Activated CD4-positive, alpha-beta memory T cell treated with anti-CD3 and anti-CD28 coated beads, Interleukin-2, amount 10 ng/mL, durations not matched to agents 7 days and 5 days (primary cell): ENCODE measurements at regions of chr12 and their contacts with region 1.

Region 1: GRCh38 chr12:8544295-8544694 is 3.6 kb upstream of the CLEC4E start:
- DNase-seq: peak; percentile 76
- H3K4me3 Mint-ChIP-seq: no peak overlapping the region
- H3K27ac Mint-ChIP-seq: no peak overlapping the region
- H3K4me1 Mint-ChIP-seq: peaks cover 4% of the 10 kb centered on the region
- H3K27me3 Mint-ChIP-seq: peaks cover 31% of the 10 kb centered on the region

Region 2: GRCh38 chr12:8465306-8465996 is 78.8 kb before region 1 on chr12:
- CTCF ChIA-PET with region 1: no interaction called
- POLR2A ChIA-PET with region 1: no interaction called
- DNase-seq: no peak
- H3K4me3 Mint-ChIP-seq: no peak overlapping the region
- H3K27ac Mint-ChIP-seq: no peak overlapping the region
- H3K4me1 Mint-ChIP-seq: no peaks in the 10 kb centered on the region
- H3K27me3 Mint-ChIP-seq: peaks cover 16% of the 10 kb centered on the region

Region 3: DNA sequence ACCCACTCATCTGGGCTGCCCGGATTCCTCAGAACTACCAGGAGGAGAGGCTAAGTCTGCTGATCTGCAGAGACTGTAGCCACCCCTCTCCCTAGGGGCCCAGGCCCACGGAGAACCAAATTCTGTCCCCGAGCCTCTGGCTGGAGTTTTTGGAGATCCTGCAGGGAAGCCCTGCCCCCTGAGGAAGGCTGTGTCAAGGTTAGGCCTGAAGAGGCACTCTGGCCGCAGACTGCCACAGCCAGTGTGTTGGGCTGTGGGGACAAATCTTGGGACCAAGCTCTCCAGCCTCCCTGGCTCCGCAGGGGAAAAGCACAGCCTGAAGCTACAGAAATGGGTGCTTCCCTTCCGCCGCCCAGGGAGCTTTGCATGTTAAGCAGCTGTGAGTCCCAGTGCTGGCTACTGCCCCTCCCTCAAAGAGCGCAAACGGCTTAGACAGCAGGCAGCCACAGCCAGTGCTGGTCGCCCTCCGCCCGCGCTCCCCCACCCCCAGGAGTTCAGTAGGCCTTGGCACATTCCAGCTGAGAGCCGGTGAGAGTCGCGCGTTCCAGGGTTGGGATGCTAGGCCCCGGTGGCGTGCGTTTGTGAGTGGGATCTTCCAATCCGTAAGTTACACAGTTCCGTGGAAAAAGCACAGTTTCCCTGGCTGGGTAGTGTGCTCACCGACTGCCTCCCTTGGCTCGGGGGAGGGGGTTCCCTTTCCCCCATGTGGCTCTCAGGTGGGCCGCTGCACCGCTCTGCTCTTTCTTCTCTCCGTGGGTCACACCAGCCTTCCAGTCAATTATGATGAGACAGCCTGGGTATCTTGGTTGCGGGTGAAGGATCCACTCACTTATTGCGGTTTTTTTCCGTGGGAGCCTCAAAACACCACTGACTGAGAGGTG is 16.8 kb before region 1 on chr12:
- CTCF ChIA-PET with region 1: interaction called, 11 read pairs
- POLR2A ChIA-PET with region 1: no interaction called
- DNase-seq: no peak
- H3K4me3 Mint-ChIP-seq: no peak overlapping the region
- H3K27ac Mint-ChIP-seq: no peak overlapping the region
- H3K4me1 Mint-ChIP-seq: no peaks in the 10 kb centered on the region
- H3K27me3 Mint-ChIP-seq: peaks cover 41% of the 10 kb centered on the region

Region 4: DNA sequence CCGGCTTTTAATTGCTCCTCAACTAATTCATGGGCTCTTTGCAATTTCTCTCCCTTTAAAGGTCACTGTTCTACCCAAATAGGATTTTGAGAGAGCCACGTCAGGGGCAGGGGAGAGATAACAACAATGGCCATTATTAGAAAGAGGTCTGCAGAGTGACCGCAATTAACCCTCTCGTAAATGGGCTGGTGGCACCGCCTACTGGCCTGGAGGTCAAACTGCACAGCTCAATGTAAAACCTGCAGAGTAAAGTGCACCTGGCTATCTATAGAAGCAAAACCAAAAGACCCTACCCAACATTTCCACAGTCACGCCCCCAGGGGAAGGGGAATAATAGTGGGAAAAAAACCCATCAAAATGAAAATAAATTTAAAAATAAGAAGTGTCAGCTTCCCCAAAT is 18.0 kb after region 1 on chr12:
- CTCF ChIA-PET with region 1: interaction called, 12 read pairs
- POLR2A ChIA-PET with region 1: no interaction called
- DNase-seq: no peak
- H3K4me3 Mint-ChIP-seq: no peak overlapping the region
- H3K27ac Mint-ChIP-seq: no peak overlapping the region
- H3K4me1 Mint-ChIP-seq: no peaks in the 10 kb centered on the region
- H3K27me3 Mint-ChIP-seq: no peaks in the 10 kb centered on the region

Region 5: DNA sequence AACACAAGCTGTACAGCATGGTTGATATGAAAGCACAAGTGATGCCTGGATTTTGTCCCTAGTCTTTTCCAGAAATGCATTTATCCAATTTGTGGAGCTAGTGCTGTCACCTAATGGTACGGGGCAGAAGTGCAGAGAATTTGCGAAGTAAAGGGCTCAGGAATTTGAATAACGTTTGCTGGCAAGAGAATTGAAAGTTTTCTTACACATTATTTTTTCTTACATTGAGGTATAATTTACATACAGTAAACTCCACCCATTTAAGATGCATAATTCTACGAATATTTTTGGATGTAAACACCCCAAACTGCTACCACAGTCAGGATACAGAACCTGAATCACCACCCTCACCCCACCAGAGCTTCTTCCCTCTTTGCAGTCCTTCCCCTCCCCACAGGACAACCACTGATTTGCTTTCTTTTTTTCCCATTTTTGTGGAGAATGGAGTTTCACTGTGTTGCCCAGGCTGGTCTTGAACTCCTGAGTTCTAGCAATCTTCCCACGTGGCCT is 64.8 kb after region 1 on chr12:
- CTCF ChIA-PET with region 1: interaction called, 43 read pairs
- POLR2A ChIA-PET with region 1: no interaction called
- DNase-seq: no peak
- H3K4me3 Mint-ChIP-seq: no peak overlapping the region
- H3K27ac Mint-ChIP-seq: no peak overlapping the region
- H3K4me1 Mint-ChIP-seq: peaks cover 9% of the 10 kb centered on the region
- H3K27me3 Mint-ChIP-seq: peaks cover 17% of the 10 kb centered on the region

Region 6: GRCh38 chr12:8709124-8709830 is 165.0 kb after region 1 on chr12:
- CTCF ChIA-PET with region 1: no interaction called
- POLR2A ChIA-PET with region 1: no interaction called
- DNase-seq: no peak
- H3K4me3 Mint-ChIP-seq: no peak overlapping the region
- H3K27ac Mint-ChIP-seq: no peak overlapping the region
- H3K4me1 Mint-ChIP-seq: no peaks in the 10 kb centered on the region
- H3K27me3 Mint-ChIP-seq: no peaks in the 10 kb centered on the region

Region 7: GRCh38 chr12:8890313-8891085 is 346.2 kb after region 1 on chr12:
- CTCF ChIA-PET with region 1: interaction called, 27 read pairs
- POLR2A ChIA-PET with region 1: no interaction called
- DNase-seq: peak; percentile 59
- H3K4me3 Mint-ChIP-seq: peak overlapping the region; percentile 71
- H3K27ac Mint-ChIP-seq: no peak overlapping the region
- H3K4me1 Mint-ChIP-seq: peaks cover 3% of the 10 kb centered on the region
- H3K27me3 Mint-ChIP-seq: peaks cover 2% of the 10 kb centered on the region

Region 8: DNA sequence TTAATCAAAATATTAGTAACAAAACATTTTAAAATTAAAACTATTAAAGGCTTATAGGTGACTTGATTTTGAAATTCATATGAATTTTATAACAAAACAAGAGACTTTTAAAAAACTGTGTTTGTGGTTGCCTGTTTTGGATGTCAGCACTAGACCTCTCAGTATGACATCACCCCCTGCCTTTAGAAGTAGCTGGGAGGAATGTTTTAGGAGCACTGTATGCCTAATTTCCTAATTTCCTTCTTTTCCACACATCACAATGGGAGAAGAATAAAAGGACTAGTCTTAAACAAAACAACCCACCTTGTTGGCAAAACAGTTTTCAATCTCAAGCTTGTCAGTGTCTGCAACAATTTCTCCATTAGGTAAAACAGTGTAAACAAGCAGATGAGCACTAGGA is 712.0 kb after region 1 on chr12:
- CTCF ChIA-PET with region 1: no interaction called
- POLR2A ChIA-PET with region 1: no interaction called
- DNase-seq: no peak
- H3K4me3 Mint-ChIP-seq: no peak overlapping the region
- H3K27ac Mint-ChIP-seq: no peak overlapping the region
- H3K4me1 Mint-ChIP-seq: peaks cover 8% of the 10 kb centered on the region
- H3K27me3 Mint-ChIP-seq: peaks cover 5% of the 10 kb centered on the region